Ascending aorta (tissue), 2 donors: ENCODE measurements at regions of chr7 and their contacts with region 1.

Region 1: GRCh38 chr7:134690016-134690415 is 43.4 kb downstream of the BPGM start:
- DNase-seq: no peak
- H3K4me3 ChIP-seq: peak overlapping the region; percentile 48 to 68
- H3K27ac ChIP-seq: peak overlapping the region; percentile 95
- H3K4me1 ChIP-seq: peaks cover 12 to 45% of the 10 kb centered on the region in 2 donors
- H3K27me3 ChIP-seq: no peaks in the 10 kb centered on the region
- CTCF ChIP-seq: peak; percentile 52 to 72 (median 60)

Region 2: DNA sequence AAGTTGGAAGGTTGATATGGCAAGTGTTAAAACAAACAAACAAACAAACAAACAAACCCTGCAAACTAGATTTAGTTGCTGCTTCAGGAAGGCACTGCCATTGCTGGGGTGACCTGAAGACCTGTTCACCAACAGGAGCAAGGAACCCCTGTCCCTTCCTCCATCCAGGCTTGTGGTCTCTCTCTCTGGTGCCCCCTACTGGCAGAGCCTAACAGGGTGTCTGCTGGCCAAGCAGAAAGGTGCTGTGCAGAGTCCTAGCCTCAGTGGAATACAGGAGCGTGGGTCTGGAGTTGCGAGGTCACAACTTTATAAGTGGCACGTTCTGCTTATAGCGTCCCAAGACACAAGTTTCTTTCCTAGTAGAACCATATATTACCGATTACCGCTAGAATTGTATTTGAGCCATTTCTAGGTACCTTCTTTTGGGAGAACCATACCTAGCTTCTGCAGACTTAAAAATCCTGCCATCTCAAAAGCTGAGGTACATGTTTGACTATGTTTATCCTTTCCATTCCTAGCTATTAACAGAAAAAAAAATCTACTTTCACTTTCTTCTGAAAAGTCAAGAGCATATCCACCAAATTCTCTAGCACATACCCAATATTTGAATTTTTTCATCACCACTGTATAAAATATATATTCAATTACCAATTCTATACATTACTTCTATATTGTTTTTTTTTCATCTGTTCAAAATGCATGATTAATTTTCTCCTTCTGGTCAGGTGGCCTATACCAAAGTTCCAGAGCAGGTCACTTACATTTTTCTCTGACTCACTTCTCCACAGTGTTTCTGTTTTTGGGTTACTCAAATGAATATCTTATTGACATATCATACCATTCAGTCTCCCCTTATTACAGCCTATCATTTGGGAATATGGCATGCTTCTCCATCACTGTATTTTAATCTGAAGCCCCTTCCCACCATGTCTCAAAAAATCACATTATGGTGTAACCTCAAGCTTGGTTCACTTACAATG is 60.4 kb after region 1 on chr7:
- intact Hi-C with region 1: loop called (anchors 2 kb)
- DNase-seq: peak in 1 of 2 donors; percentile 72
- H3K4me3 ChIP-seq: peak overlapping the region in 1 of 2 donors; percentile 6
- H3K27ac ChIP-seq: no peak overlapping the region
- H3K4me1 ChIP-seq: peaks cover 0 to 15% of the 10 kb centered on the region in 2 donors
- H3K27me3 ChIP-seq: no peaks in the 10 kb centered on the region
- CTCF ChIP-seq: peak; percentile 57 to 71 (median 58)

Region 3: DNA sequence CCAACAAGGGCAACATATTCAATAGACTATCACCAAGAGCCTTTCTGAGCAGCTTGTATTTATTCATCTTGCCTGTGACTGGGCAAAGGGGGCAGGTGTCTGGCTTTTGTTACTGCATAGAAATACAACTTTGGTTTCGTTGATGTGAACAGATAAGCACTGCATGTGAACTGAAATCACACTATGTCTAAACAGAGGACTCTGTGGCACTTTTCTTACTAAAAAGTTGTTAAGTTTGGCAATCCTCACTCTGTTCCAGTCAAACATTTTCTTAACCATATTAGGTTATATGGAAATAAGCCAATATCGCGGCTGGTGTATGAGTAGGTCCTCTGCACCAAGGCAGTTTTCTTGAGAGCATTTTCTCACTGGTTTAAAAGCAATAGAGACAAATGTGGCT is 137.9 kb after region 1 on chr7:
- intact Hi-C with region 1: loop called (anchors 5 kb)
- DNase-seq: peak in 1 of 2 donors; percentile 77
- H3K4me3 ChIP-seq: peak overlapping the region in 1 of 2 donors; percentile 14
- H3K27ac ChIP-seq: peak overlapping the region; percentile 89
- H3K4me1 ChIP-seq: peaks cover 12 to 79% of the 10 kb centered on the region in 2 donors
- H3K27me3 ChIP-seq: no peaks in the 10 kb centered on the region
- CTCF ChIP-seq: no peak

Region 4: GRCh38 chr7:134954197-134955082 is 264.4 kb after region 1 on chr7:
- intact Hi-C with region 1: loop called (anchors 5 kb)
- DNase-seq: no peak
- H3K4me3 ChIP-seq: no peak overlapping the region
- H3K27ac ChIP-seq: peak overlapping the region in 1 of 2 donors; percentile 26
- H3K4me1 ChIP-seq: no peaks in the 10 kb centered on the region
- H3K27me3 ChIP-seq: no peaks in the 10 kb centered on the region
- CTCF ChIP-seq: peak; percentile 38 to 58 (median 38)

Region 5: GRCh38 chr7:135170274-135170997 is 480.4 kb after region 1 on chr7 and contains the start of gene CYREN:
- intact Hi-C with region 1: loop called (anchors 2 kb)
- DNase-seq: peak; percentile 81 to 97
- H3K4me3 ChIP-seq: peak within 1 kb of the TSS; percentile 68 to 92
- H3K27ac ChIP-seq: peak within 1 kb of the TSS; percentile 95 to 98
- H3K4me1 ChIP-seq: peaks cover 15 to 27% of the 10 kb centered on the region in 2 donors
- H3K27me3 ChIP-seq: no peaks in the 10 kb centered on the region
- CTCF ChIP-seq: peak; percentile 80 to 86 (median 81)
- total RNA-seq, gene CYREN: 21.6 TPM

Region 6: GRCh38 chr7:135558337-135558767 is 868.3 kb after region 1 on chr7:
- intact Hi-C with region 1: loop called (anchors 10 kb)
- DNase-seq: peak in 1 of 2 donors; percentile 76
- H3K4me3 ChIP-seq: peak overlapping the region; percentile 65 to 91
- H3K27ac ChIP-seq: peak overlapping the region; percentile 90 to 91
- H3K4me1 ChIP-seq: peaks cover 0 to 7% of the 10 kb centered on the region in 2 donors
- H3K27me3 ChIP-seq: no peaks in the 10 kb centered on the region
- CTCF ChIP-seq: peak; percentile 36 to 57 (median 45)